ENCODE measurements at regions of chr18 and their contacts with region 1.

Region 1: GRCh38 chr18:66136039-66136438 is 385.2 kb downstream of the CDH7 start:
- DNase-seq: peak in 1 of 2 experiments; percentile 43
- H3K4me3 ChIP-seq: no peak overlapping the region
- H3K27ac ChIP-seq: no peak overlapping the region
- H3K4me1 ChIP-seq: no peaks in the 10 kb centered on the region
- H3K27me3 ChIP-seq: no peaks in the 10 kb centered on the region
- CTCF ChIP-seq: no peak
- EP300 ChIP-seq: peak in 1 of 2 experiments; percentile 37; a peak in 1 of 3 replicates
- POLR2A ChIP-seq: no peak
- RAD21 ChIP-seq: no peak

Region 2: DNA sequence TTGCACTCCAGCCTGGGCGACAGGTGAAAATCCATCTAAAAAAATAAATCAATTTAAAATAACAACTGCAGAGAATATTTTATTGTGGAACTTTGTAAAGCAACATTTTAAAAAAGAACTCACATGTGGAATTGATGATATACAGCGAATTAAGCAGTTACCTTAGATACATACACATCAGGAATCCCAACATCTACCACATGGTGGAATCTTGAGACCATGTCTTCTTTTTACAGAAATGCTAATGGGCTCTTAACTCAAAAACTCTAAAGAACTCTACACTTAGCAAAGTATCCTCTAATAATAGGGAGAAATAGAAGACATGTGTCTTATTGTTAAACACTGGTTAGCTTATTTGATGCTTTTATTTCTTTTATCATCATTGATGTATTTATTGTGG is 11.6 kb before region 1 on chr18:
- CTCF ChIA-PET with region 1: interaction called, 11 read pairs
- POLR2A ChIA-PET with region 1: no interaction called
- DNase-seq: no peak
- H3K4me3 ChIP-seq: no peak overlapping the region
- H3K27ac ChIP-seq: no peak overlapping the region
- H3K4me1 ChIP-seq: no peaks in the 10 kb centered on the region; a peak in 1 of 7 replicates
- H3K27me3 ChIP-seq: no peaks in the 10 kb centered on the region
- CTCF ChIP-seq: peak in 1 of 3 experiments; percentile 39; a peak in 2 of 4 replicates
- EP300 ChIP-seq: no peak
- POLR2A ChIP-seq: no peak
- RAD21 ChIP-seq: peak; percentile 56 to 58

Region 3: DNA sequence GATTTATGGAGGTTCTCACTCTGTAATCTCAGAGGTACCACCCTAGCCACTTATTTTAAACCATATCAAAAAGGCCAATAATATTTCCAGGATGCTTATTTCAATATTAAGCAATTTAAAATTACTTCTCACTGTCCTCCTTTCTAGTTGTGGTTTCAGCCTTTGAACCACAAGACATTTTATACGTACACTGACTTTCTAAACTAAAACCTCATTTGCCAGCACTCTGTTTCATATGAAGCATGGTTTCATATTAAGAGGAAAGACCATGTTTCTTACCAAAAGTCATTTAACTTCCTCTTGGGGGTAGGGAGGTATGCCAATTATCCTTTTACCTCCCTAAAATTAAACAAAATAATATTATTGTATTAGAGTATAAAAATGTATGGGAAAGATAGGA is 14.6 kb after region 1 on chr18:
- CTCF ChIA-PET with region 1: no interaction called
- POLR2A ChIA-PET with region 1: no interaction called
- DNase-seq: no peak
- H3K4me3 ChIP-seq: no peak overlapping the region
- H3K27ac ChIP-seq: no peak overlapping the region
- H3K4me1 ChIP-seq: no peaks in the 10 kb centered on the region
- H3K27me3 ChIP-seq: no peaks in the 10 kb centered on the region
- CTCF ChIP-seq: no peak
- EP300 ChIP-seq: no peak
- POLR2A ChIP-seq: no peak
- RAD21 ChIP-seq: no peak

Measured in H1 (cell line).